ENCODE measurements at regions of chr1 and their contacts with region 1.

Region 1: GRCh38 chr1:215114154-215114933 is 31.8 kb downstream of the KCNK2 start:
- DNase-seq: no peak
- H3K4me3 ChIP-seq: no peak overlapping the region
- H3K27ac ChIP-seq: no peak overlapping the region
- H3K4me1 ChIP-seq: peaks cover 0 to 5% (median 0%) of the 10 kb centered on the region in 4 donors
- H3K27me3 ChIP-seq: no peaks in the 10 kb centered on the region
- CTCF ChIP-seq: no peak

Region 2: GRCh38 chr1:214912127-214912526 is 202.2 kb before region 1 on chr1:
- intact Hi-C with region 1: no loop called
- DNase-seq: no peak
- H3K4me3 ChIP-seq: no peak overlapping the region
- H3K27ac ChIP-seq: no peak overlapping the region
- H3K4me1 ChIP-seq: no peaks in the 10 kb centered on the region
- H3K27me3 ChIP-seq: no peaks in the 10 kb centered on the region
- CTCF ChIP-seq: no peak

Region 3: GRCh38 chr1:215104283-215104682 is 10.1 kb before region 1 on chr1:
- intact Hi-C with region 1: loop called (anchors 1 kb)
- DNase-seq: no peak
- H3K4me3 ChIP-seq: no peak overlapping the region
- H3K27ac ChIP-seq: no peak overlapping the region
- H3K4me1 ChIP-seq: no peaks in the 10 kb centered on the region
- H3K27me3 ChIP-seq: no peaks in the 10 kb centered on the region
- CTCF ChIP-seq: no peak

Region 4: GRCh38 chr1:215146341-215146826 is 32.0 kb after region 1 on chr1:
- intact Hi-C with region 1: no loop called
- DNase-seq: no peak
- H3K4me3 ChIP-seq: no peak overlapping the region
- H3K27ac ChIP-seq: no peak overlapping the region
- H3K4me1 ChIP-seq: no peaks in the 10 kb centered on the region
- H3K27me3 ChIP-seq: no peaks in the 10 kb centered on the region
- CTCF ChIP-seq: no peak